ENCODE measurements at regions of chr7 and their contacts with region 1.

Region 1: DNA sequence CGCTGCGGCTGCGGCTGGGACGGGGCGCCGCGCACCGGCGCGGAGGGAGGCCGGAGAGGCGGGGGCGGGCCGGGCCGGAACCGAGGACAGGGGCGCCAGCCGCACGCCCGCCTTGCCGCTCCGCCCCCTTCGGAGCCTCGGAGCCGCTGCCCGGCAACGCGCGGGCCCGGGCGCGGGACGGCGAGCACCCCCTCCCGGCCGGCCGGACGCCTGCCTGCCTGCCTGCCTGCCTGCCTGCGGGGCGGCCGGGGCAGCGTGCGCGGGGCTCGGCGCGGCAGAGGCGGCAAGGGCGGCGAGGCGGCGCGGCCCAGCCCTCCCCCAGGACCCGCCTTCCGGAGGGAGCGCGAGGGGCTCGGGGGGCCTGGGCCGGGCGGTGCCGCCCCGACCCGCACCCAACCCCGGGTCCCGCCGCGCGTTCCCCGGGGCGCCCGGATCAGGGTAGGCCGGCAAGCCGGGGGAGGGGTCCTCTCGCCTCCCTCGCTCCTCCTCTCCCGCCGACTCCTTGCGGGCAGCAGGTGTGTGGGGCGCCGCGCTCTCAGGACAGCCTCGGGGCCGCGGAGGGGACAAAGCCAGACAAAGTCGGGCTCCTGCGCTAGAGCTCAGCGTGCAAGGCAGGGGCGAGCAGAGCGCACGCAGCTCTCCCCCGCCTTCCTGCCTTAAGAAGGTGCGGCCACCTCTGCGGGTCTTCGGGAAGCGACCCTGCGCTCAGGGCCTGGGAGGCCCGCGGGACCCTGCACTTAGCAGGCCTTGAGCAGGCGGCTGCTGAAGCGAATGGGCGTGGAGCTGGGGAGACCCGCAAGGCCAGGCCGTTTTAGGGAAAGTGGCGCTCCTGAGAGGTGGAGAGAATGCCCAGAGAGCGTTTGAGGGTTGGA is at the start of gene KIAA1549:
- DNase-seq: peak; percentile 74
- ATAC-seq: peak; percentile 96
- total RNA-seq, gene KIAA1549: 2.1 TPM

Region 2: DNA sequence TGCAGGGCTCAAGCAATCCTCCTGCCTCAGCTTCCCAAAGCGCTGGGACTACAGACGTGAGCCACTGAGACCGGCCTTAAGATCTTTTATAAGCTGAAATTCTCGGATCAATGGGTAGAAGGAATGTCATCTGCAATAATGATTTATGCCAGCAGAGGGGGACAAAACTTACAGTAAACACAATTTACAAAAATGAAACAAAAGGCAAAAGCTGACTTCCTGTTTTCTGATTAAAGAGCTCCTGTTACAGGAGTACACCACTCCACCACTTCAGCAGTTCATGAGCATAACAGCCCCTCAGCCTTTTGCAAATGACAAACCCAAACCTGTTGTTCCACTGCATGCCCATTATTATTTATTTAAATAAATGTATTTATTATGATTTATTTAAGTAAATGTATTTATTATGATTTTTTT is 95.1 kb before region 1 on chr7:
- intact Hi-C with region 1: loop called (anchors 5 kb)
- DNase-seq: no peak
- ATAC-seq: peak; percentile 20